Right ventricle myocardium inferior (tissue), 1 donor: ENCODE measurements at regions of chr18 and their contacts with region 1.

Region 1: DNA sequence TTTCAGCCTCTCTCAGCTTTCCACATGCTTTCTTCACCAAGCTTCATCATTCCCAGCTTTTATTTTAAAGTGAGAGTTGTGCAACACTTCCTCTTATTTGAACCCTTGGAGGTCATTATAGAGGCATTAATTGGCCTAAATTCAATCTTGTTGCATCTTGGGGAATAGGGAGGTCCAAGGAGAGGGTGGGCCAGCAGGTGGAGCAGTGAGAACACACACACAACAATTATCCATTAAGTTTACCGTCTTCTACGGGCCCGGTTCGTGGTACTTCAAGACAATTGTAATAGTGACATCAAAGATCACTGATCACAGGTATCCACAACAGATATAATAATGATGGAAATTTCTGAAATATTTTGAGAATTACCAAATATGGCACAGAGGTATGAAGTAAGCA is 457.2 kb upstream of the SMIM21 start:
- DNase-seq: no peak
- ATAC-seq: no peak

Region 2: DNA sequence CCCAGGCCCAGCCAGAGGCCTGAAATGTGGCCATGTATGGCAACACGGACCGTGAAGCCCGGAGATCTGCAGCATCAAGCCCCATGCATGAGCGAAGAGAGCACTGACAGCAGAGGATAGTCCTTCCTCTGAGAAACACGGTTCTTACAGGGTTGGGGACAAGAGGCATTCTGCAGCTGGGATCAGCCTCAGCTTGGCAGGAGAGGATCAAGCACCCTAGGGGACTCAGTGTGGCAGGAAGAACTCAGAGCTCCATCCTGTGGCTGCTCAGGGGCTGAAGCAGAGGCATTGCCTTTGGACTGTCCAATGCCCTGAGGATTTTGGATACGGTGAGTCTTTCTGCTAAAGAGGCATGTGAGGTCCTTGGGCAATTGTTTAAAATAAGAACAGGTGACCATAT is 241.6 kb after region 1 on chr18:
- intact Hi-C with region 1: loop called (anchors 2 kb)
- DNase-seq: no peak
- ATAC-seq: peak; percentile 72

Region 3: DNA sequence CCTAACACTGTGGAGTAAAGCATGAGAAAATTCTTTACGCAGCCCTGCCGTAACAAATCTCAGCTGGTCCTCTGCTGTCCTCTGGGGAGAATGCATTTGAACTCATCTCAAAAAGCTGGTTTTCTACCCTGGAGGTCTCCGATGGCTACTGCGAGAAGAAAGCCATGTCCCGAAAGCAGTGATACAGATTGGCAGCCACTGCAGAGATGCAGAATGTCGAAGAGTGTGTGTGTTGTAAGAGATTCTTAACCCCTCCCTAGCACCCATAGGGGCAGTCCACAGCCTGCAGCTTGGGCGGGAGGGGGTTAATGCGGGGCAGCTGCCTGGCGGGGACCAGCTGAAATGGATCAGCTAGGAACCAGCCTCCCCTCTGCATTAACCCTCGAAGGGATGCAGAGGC is 374.4 kb after region 1 on chr18:
- intact Hi-C with region 1: loop called (anchors 5 kb)
- DNase-seq: no peak
- ATAC-seq: no peak